Colonic mucosa (tissue), 4 donors: ENCODE measurements at regions of chr9 and their contacts with region 1.

Region 1: DNA sequence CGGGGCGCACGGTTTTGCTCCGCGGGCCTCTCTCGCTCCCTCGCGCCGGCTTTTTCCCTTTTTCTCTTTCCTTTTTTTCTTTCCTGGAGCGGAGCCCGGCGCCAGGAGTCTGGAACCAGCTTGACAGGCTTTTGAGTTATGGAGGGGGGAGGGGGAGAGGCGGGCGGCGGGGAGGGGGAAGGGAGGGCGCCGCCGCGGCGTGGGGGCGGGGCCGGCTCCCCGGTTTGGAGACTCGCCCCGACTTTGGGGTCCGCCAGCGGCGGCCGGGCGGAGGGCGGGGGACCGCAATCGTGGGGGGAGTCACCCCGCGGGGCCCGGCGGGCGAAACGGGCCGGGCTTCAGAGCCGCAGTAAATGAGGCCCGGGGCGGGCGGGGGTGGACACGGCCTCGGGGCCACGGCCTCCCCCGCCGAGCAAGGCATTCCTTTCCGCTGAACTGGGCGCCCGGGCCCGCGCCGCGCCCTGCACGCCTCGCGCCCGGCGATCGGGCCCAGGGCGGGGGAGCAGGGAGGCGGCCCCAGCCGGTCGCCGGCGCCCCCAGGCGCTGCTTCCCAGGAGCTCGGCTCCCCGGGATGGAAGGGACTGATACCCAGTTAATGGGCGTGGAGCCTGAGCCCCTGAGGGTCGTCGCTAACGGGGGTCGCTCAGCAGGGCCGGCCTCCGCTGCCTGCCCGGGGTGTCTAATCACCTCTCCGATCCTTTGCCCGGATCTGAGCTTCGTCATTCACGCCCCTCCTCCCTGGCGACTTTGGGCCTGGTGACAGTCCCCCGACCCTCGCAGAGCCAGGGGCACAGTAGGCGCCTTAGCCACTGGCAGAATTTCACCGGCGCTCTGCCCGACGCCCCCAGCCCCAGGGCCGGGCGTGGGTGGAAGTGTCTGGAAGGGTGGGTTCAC is 138.1 kb downstream of the C9orf50 start:
- DNase-seq: peak; percentile 90
- H3K4me3 ChIP-seq: peak overlapping the region; percentile 50
- H3K27ac ChIP-seq: peak overlapping the region; percentile 95
- H3K4me1 ChIP-seq: peaks cover 10% of the 10 kb centered on the region
- H3K27me3 ChIP-seq: no peaks in the 10 kb centered on the region
- CTCF ChIP-seq: no peak

Region 2: DNA sequence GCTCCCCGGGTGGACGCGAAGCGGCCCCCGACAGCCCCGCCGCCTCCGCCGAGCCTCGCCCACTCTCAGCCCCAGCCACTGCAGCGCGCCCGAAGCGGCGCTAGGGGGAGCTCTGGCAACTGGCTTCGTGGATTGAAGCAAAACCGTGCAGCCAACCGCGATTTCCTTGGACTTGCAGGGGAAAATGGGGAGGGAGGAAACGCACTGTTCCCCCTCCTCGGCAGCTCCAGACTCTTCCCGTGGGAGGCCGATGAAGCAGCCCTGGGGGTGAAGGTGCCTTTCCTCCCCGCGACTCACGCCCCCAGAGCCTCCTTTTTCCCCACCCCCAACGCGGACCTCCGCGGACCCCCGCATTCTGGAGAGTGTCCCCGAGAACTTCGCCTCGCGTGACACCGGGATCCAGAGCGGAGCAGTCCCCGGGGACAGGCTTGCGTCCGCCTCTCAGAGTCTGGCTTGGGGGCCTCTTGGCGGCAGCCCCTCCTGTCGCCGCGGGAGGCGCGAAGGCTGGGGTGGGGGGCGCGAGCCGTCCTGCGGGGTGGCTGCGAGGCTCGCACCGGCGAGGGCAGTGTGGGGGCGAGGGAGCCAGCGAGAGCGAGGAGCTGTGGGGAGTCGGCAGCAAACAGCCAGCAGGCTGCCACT is 308.6 kb before region 1 on chr9:
- intact Hi-C with region 1: loop called (anchors 5 kb)
- DNase-seq: peak; percentile 95
- H3K4me3 ChIP-seq: peak overlapping the region; percentile 73
- H3K27ac ChIP-seq: peak overlapping the region; percentile 98
- H3K4me1 ChIP-seq: peaks cover 12% of the 10 kb centered on the region
- H3K27me3 ChIP-seq: no peaks in the 10 kb centered on the region
- CTCF ChIP-seq: peak; percentile 94

Region 3: DNA sequence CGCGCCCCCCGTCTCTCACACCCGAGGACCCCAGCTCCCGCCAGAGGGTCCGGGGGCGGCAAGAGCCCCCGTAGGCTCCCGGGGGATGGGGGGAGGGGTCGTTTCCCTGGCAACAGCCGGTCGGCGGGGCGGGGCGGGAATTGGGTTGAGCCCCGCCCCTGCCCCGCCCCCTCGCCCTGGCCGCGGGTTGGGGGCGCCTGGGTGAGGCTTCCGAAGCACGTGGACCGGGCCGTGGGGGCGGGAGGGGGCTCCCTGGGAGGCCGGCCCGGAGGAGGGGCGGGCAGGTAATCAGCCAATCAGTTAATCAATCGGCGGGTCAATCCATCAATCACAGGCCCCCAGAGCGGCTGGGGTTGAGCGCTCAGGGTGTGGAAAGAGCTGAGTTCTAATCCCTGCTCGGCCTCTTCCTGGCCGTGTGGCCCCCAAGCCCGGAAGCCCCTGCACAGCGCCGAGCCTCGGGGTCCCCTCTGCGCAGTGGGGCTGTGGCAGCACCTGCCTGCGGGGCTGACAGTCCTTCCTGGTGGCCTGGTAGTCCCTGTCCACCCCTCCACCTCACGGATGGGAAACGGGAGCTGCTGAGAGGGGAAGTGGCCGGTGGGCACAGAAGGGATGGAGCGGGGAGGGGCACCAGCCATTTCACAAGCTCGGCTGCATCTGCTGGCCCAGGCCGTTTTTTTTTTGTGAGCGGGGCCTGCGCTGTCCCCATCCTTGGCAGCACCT is 130.5 kb before region 1 on chr9:
- intact Hi-C with region 1: no loop called
- DNase-seq: peak; percentile 39
- H3K4me3 ChIP-seq: peak overlapping the region; percentile 22
- H3K27ac ChIP-seq: peak overlapping the region; percentile 58
- H3K4me1 ChIP-seq: no peaks in the 10 kb centered on the region
- H3K27me3 ChIP-seq: no peaks in the 10 kb centered on the region
- CTCF ChIP-seq: no peak

Region 4: DNA sequence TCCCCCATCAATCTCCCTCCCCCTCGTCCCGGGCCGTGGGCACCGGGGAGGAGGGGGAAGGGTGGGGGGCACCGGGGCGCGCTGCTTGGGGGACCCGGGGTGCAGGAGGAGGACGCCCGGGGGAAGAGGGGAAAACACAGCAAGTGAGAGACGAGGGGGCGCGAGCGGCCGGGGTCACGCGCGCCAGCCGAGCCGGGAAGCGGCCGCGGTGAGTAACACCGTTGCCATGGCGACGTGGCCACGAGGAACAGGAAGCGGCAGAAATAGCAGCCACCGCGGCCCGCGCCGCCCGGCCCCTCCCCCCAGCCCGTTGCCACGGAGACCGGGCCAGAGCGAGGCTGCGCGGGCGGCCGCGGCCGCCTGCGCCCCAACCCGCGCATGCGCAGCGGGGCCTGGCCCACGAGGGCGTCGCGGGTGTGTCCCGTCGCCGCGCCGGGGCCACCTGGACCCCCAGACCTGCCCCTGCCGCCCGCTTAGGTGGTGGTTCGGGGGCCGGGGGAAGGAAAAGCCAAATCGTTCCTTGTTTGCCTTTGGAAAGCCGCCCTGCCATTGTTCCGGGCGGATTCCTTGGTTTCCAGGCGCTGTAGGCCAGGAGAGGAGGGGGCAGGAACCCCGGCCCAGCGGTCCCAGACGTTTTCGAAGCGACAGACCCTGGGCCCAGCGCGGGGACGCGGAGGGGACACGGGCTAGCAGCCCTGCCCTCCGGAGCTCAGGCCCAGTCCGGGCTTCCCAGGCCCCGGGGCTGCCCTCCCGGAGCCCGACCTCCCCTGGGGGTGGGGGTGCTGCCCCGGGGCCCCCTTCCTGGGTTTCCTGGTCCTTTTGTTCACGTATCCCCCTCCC is 69.0 kb before region 1 on chr9:
- intact Hi-C with region 1: loop called (anchors 5 kb)
- DNase-seq: peak; percentile 98
- H3K4me3 ChIP-seq: peak overlapping the region; percentile 51
- H3K27ac ChIP-seq: peak overlapping the region; percentile 97
- H3K4me1 ChIP-seq: peaks cover 12% of the 10 kb centered on the region
- H3K27me3 ChIP-seq: no peaks in the 10 kb centered on the region
- CTCF ChIP-seq: no peak